ENCODE measurements at regions of chr1 and their contacts with region 1.

Region 1: DNA sequence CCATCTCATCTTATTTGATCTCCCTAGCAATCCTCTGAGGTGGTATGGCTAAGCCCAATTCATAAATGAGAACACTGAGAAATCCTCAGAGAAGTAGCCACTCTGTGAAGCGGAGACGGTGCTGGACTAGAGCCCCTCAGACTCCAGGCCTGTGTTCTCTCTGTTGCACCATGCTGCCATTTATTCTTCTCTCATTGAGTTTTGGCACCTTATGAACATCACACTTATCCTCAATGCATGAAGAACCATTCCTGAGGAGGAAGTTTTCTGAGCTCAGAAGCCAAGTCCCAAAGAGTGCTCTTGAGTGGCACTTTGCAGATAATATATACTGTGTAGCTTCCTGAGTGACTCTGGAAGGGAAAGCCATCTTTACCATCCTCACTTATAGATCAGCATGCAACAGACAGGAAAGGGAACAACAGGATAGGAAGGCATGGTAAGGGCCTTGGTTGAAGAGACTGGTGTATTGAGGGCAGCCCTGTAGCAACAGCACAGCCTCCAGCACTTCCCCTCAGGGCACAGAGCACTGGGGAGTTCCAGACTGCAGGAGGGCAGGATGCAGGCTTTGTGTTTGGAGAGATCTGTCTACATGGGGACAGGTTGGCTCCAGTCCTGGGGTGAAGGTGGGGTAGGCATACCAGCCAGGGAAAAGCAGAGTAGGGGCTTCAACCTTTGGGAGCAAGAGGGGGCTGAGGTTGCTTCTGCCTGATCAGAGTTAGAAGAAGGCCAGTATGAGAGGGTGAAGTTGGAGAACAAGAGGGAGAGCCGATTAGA is 1.6 kb upstream of the CRNN start:
- DNase-seq: no peak
- H3K4me3 ChIP-seq: no peak overlapping the region
- H3K27ac ChIP-seq: no peak overlapping the region
- H3K4me1 ChIP-seq: no peaks in the 10 kb centered on the region
- H3K27me3 ChIP-seq: peaks cover 9% of the 10 kb centered on the region; the same call in 1 of the 2 replicates

Region 2: GRCh38 chr1:152367434-152367833 is 48.2 kb before region 1 on chr1:
- in situ Hi-C with region 1: loop called (anchors 5 kb)
- DNase-seq: no peak
- H3K4me3 ChIP-seq: no peak overlapping the region
- H3K27ac ChIP-seq: no peak overlapping the region
- H3K4me1 ChIP-seq: peaks cover 14% of the 10 kb centered on the region; the same call in 1 of the 2 replicates
- H3K27me3 ChIP-seq: no peaks in the 10 kb centered on the region